Common myeloid progenitor, CD34-positive (primary cell): ENCODE measurements at regions of chr10 and their contacts with region 1.

Region 1: GRCh38 chr10:12717981-12718707 is 283.4 kb downstream of the CCDC3 start:
- DNase-seq: no peak
- H3K4me3 ChIP-seq: no peak overlapping the region
- H3K27ac ChIP-seq: no peak overlapping the region
- H3K4me1 ChIP-seq: peaks cover 0 to 12% (median 6%) of the 10 kb centered on the region in 4 experiments
- H3K27me3 ChIP-seq: no peaks in the 10 kb centered on the region

Region 2: GRCh38 chr10:12644380-12645144 is 73.6 kb before region 1 on chr10:
- CTCF ChIA-PET with region 1: interaction called, 4 read pairs
- POLR2A ChIA-PET with region 1: interaction called, 12 read pairs
- DNase-seq: peak in 2 of 3 donors; percentile 14 to 20
- H3K4me3 ChIP-seq: no peak overlapping the region
- H3K27ac ChIP-seq: no peak overlapping the region
- H3K4me1 ChIP-seq: peaks cover 0 to 4% (median 0%) of the 10 kb centered on the region in 4 experiments
- H3K27me3 ChIP-seq: no peaks in the 10 kb centered on the region